ENCODE measurements at regions of chr5 and their contacts with region 1.

Region 1: GRCh38 chr5:147464211-147464610 is 45.7 kb downstream of the DPYSL3 start:
- DNase-seq: peak; percentile 25
- H3K4me3 ChIP-seq: no peak overlapping the region
- H3K27ac ChIP-seq: no peak overlapping the region
- H3K4me1 ChIP-seq: no peaks in the 10 kb centered on the region
- H3K27me3 ChIP-seq: no peaks in the 10 kb centered on the region
- CTCF ChIP-seq: peak; percentile 37 to 67

Region 2: DNA sequence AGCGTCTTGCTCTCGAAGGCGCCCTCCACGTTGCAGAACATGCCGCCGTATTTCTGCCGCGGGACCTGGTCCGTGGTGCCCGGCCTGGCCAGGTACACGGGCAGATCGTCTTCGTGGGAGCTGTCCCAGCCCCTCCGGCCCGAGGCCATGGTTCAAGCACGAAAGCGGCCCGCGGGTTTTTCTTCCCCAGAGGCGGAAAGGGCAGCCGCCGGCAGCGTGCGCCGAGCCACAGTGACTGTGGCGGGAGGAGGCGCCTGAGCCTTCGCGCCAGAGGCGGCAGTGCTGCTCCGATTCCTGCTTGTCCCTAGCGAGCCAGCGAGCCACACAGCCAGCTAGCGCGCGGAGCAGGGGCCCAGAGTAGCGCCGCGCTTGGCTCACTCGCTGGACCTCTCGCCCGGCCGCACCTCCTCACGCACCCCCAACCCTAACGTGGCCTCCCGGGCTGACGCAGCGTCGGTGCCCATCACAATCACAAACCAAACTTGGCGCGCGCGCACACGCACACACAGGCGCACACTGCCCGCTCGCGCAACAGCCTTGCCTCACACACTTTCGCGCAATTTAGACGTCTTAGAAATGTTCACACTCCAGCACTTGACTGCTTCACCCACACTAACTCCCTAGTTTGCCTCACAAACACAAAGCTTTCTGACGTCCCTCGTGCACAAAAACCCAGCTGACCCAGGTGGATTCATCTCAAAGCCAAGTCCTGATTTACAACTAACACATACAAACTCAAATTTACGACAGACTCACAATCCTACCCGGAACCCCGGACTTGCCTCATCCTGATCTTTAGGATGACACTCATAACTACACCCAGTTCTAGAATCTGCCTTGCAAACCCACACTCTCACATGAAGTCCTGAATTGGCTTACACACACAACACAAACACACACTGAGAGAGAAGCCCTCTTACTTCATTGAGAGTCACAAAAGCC is 45.8 kb after region 1 on chr5 and contains the start of gene DPYSL3:
- CTCF ChIA-PET with region 1: no interaction called
- dilution Hi-C with region 1: no loop called
- in situ Hi-C with region 1: no loop called
- intact Hi-C with region 1: loop called (anchors 5 kb)
- DNase-seq: peak; percentile 70
- H3K4me3 ChIP-seq: peak within 1 kb of the TSS; percentile 57 to 77 (median 70)
- H3K27ac ChIP-seq: no peak within 1 kb of the TSS
- H3K4me1 ChIP-seq: peaks cover 17% of the 10 kb centered on the region
- H3K27me3 ChIP-seq: no peaks in the 10 kb centered on the region
- CTCF ChIP-seq: peak in 1 of 2 donors; percentile 30
- total RNA-seq, gene DPYSL3: 2.8 to 8.8 TPM

Region 3: GRCh38 chr5:147558826-147559225 is 94.6 kb after region 1 on chr5:
- CTCF ChIA-PET with region 1: interaction called, 4 read pairs
- dilution Hi-C with region 1: no loop called
- in situ Hi-C with region 1: loop called in 1 of 2 experiments (anchors 10 kb)
- intact Hi-C with region 1: loop called (anchors 1 kb)
- DNase-seq: peak; percentile 57
- H3K4me3 ChIP-seq: no peak overlapping the region
- H3K27ac ChIP-seq: no peak overlapping the region
- H3K4me1 ChIP-seq: peaks cover 4% of the 10 kb centered on the region
- H3K27me3 ChIP-seq: no peaks in the 10 kb centered on the region
- CTCF ChIP-seq: peak; percentile 61 to 71

Region 4: DNA sequence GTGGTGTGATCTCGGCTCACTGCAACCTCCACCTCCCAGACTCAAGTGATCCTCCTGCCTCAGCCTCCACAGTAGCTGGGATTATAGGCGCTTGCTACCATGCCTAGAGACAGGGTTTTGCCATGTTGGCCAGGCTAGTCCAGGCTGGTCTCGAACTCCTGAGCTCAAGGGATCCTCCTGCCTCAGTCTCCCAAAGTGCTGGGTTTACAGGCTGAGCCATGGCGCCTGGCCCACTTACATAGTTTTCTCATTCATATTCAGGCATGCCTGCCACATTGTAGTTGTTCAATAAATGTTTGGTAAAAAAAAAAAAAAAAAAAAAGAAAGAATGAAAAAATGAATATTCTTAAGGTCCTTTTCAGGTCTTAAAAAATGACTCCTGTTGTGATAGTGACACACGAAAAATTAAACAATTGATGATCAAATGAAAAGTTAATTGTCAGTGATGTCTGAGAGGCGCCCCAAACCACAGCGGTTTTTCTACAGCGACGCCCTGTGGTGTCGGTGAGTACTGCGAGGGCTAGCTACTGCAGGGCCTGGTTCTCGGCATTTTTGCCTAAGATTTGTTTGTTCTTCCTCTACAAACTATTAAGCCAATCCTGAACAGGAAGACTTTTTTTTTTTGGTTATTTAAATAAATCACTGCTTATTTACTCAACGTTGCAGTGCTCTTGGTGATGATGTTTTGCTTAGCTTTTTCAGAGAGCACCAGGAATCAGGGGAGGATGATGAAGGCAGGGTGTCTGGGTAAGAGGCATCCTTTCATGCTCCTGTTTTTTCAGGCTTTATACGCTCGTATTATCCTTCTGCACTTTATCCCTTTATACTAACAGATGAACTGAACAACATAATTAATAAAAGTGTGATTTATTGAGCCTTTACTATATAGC is 112.7 kb after region 1 on chr5:
- CTCF ChIA-PET with region 1: interaction called, 3 read pairs
- dilution Hi-C with region 1: no loop called
- in situ Hi-C with region 1: no loop called
- intact Hi-C with region 1: loop called (anchors 1 kb)
- DNase-seq: peak; percentile 32
- H3K4me3 ChIP-seq: no peak overlapping the region
- H3K27ac ChIP-seq: no peak overlapping the region
- H3K4me1 ChIP-seq: peaks cover 3% of the 10 kb centered on the region
- H3K27me3 ChIP-seq: peaks cover 2% of the 10 kb centered on the region
- CTCF ChIP-seq: peak; percentile 89 to 97

Measured in mammary epithelial cell (primary cell).